ENCODE measurements at regions of chr17 and their contacts with region 1.

Region 1: DNA sequence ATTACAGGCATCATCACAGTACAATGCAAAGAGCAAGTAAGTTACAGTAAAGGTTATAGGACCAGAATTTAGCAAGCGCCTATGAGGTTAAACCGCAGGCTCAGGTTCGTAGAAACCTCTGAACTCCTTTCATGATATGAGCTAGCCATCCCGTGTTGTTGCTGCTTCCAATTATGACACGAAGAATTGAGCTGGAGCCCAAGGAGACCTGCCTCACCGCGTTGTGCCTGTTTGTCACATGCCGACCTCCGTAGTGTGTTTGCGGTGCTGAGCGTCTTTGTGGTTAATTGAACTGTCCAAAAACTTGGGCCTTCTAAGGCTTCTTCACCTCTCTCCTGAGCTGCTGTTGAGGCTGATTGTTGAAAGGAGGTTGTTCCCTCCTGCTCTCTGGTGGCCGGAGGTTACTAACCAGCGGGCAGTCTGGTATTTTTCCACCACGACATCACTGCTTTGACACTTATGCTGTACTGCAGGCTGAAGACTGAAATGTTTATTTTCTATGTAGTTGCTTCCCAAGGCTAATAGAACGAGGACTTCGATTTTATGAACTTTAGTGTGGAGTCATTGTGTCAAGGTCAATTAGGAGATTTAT is 67.5 kb downstream of the SEC14L1 start:
- DNase-seq: peak; percentile 58 to 69
- H3K4me3 ChIP-seq: no peak overlapping the region
- H3K4me3 Mint-ChIP-seq: peak overlapping the region; percentile 52
- H3K27ac Mint-ChIP-seq: peak overlapping the region; percentile 84
- H3K4me1 ChIP-seq: peaks cover 13% of the 10 kb centered on the region
- H3K4me1 Mint-ChIP-seq: peaks cover 8% of the 10 kb centered on the region
- H3K27me3 ChIP-seq: no peaks in the 10 kb centered on the region
- H3K27me3 Mint-ChIP-seq: no peaks in the 10 kb centered on the region
- CTCF ChIP-seq: peak in 1 of 2 experiments; percentile 60

Region 2: GRCh38 chr17:77096570-77097214 is 111.6 kb before region 1 on chr17:
- CTCF ChIA-PET with region 1: interaction called, 6 read pairs
- POLR2A ChIA-PET with region 1: no interaction called
- intact Hi-C with region 1: loop called (anchors 1 kb)
- DNase-seq: no peak
- H3K4me3 ChIP-seq: no peak overlapping the region
- H3K4me3 Mint-ChIP-seq: no peak overlapping the region
- H3K27ac Mint-ChIP-seq: peak overlapping the region; percentile 25
- H3K4me1 ChIP-seq: peaks cover 7% of the 10 kb centered on the region
- H3K4me1 Mint-ChIP-seq: peaks cover 17% of the 10 kb centered on the region
- H3K27me3 ChIP-seq: no peaks in the 10 kb centered on the region
- H3K27me3 Mint-ChIP-seq: no peaks in the 10 kb centered on the region
- CTCF ChIP-seq: peak; percentile 60 to 87

Region 3: DNA sequence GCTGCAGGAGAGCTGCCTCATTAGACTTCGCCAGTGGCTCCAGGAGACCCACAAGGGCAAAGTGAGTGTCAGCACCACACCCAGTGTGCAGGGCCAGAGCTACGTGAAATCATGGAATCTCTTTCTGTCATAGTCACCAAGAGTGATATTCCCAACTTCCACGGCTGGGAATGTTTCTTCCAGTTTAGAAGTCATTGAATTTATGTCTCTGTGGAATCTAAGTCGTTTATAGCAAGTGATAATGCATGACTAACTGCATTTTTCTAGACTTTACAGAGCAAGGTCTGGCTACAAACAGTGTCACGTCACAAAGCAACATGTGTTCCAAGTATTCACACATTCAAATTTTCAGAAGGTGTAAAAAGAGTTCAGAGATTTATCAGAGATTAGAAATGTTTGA is 12.1 kb before region 1 on chr17:
- CTCF ChIA-PET with region 1: no interaction called
- POLR2A ChIA-PET with region 1: no interaction called
- intact Hi-C with region 1: no loop called
- DNase-seq: no peak
- H3K4me3 ChIP-seq: no peak overlapping the region
- H3K4me3 Mint-ChIP-seq: no peak overlapping the region
- H3K27ac Mint-ChIP-seq: no peak overlapping the region
- H3K4me1 ChIP-seq: no peaks in the 10 kb centered on the region
- H3K4me1 Mint-ChIP-seq: no peaks in the 10 kb centered on the region
- H3K27me3 ChIP-seq: no peaks in the 10 kb centered on the region
- H3K27me3 Mint-ChIP-seq: no peaks in the 10 kb centered on the region
- CTCF ChIP-seq: no peak

Region 4: DNA sequence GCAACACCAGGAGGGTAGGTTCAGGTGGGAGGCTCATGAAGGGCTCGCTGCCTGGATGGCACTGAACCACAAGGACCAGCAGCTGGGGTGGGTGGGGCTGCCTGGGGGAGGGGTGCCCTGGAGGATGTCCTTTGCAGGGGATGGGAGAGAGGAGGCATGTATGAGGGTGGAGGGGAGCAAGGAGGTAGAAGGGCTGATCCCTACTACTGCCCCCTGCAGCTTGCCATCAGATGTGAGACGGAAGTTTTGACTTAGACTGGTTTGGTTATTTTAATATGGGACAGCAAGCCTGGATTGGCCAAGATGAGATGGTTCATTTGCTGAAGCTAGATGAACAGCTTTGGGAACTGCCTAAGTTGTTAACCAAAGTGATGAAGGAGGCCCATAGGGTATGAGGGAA is 48.4 kb after region 1 on chr17:
- CTCF ChIA-PET with region 1: no interaction called
- POLR2A ChIA-PET with region 1: no interaction called
- intact Hi-C with region 1: no loop called
- DNase-seq: no peak
- H3K4me3 ChIP-seq: no peak overlapping the region
- H3K4me3 Mint-ChIP-seq: no peak overlapping the region
- H3K27ac Mint-ChIP-seq: no peak overlapping the region
- H3K4me1 ChIP-seq: peaks cover 22% of the 10 kb centered on the region
- H3K4me1 Mint-ChIP-seq: peaks cover 17% of the 10 kb centered on the region
- H3K27me3 ChIP-seq: no peaks in the 10 kb centered on the region
- H3K27me3 Mint-ChIP-seq: no peaks in the 10 kb centered on the region
- CTCF ChIP-seq: no peak